ENCODE measurements at regions of chr7 and their contacts with region 1.

Region 1: GRCh38 chr7:74417419-74417971 is 36.2 kb upstream of the GTF2IRD1 start:
- DNase-seq: peak; percentile 59 to 83 (median 68)
- ATAC-seq: peak; percentile 71 to 96 (median 94)
- H3K4me3 ChIP-seq: no peak overlapping the region
- H3K27ac ChIP-seq: no peak overlapping the region
- H3K4me1 ChIP-seq: peaks cover 0 to 6% (median 0%) of the 10 kb centered on the region in 12 donors
- H3K27me3 ChIP-seq: peaks cover 0 to 4% (median 0%) of the 10 kb centered on the region in 9 donors
- CTCF ChIP-seq: peak; percentile 86 to 99 (median 96)
- POLR2A ChIP-seq: no peak

Region 2: GRCh38 chr7:74275401-74275881 is 142.1 kb before region 1 on chr7:
- intact Hi-C with region 1: no loop called
- DNase-seq: no peak
- ATAC-seq: no peak
- H3K4me3 ChIP-seq: no peak overlapping the region
- H3K27ac ChIP-seq: peak overlapping the region in 1 of 12 donors; percentile 24
- H3K4me1 ChIP-seq: peaks cover 0 to 41% (median 24%) of the 10 kb centered on the region in 12 donors
- H3K27me3 ChIP-seq: no peaks in the 10 kb centered on the region
- CTCF ChIP-seq: peak; percentile 11 to 52 (median 36)
- POLR2A ChIP-seq: no peak

Region 3: DNA sequence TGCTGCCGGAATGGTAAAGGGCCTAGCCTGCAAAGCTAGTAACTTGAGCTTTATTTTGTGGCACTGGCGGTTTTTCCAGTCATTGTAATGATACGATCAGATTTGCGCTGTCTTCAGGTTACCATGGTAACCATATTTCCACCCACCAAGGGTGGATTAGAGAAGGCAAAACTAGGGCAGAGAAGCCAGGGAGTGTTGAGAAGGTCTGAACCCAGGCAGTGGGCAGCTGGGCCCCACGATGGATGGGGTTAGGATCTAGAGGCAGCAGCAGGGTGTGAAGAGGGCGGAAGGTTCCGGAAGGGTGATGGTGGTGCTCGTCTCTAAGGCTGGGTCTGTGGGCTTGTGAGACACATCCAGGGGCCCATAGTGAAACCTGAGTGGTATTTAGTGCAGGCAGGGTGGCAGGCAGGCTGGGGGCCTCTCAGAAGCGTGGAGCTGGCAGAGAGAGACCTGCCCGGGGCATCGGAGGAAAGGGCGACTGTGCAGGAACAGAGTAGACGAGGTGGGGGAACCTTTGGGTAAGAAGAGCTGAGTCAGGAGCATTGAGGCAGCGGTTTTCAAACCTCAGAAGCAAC is 152.1 kb after region 1 on chr7:
- intact Hi-C with region 1: loop called in 9 of 10 experiments (anchors 2 to 10 kb)
- DNase-seq: no peak
- ATAC-seq: no peak
- H3K4me3 ChIP-seq: no peak overlapping the region
- H3K27ac ChIP-seq: no peak overlapping the region
- H3K4me1 ChIP-seq: peaks cover 0 to 6% (median 0%) of the 10 kb centered on the region in 12 donors
- H3K27me3 ChIP-seq: no peaks in the 10 kb centered on the region
- CTCF ChIP-seq: no peak
- POLR2A ChIP-seq: no peak

Region 4: GRCh38 chr7:74709880-74710671 is 292.6 kb after region 1 on chr7:
- intact Hi-C with region 1: loop called in 1 of 10 experiments (anchors 10 kb)
- DNase-seq: no peak
- ATAC-seq: no peak
- H3K4me3 ChIP-seq: no peak overlapping the region
- H3K27ac ChIP-seq: no peak overlapping the region
- H3K4me1 ChIP-seq: no peaks in the 10 kb centered on the region
- H3K27me3 ChIP-seq: no peaks in the 10 kb centered on the region
- CTCF ChIP-seq: peak in 1 of 12 donors; percentile 10
- POLR2A ChIP-seq: no peak

Region 5: GRCh38 chr7:75048435-75049379 is 631.2 kb after region 1 on chr7:
- intact Hi-C with region 1: loop called in 2 of 10 experiments (anchors 5 kb)
- DNase-seq: no peak
- ATAC-seq: no peak
- H3K4me3 ChIP-seq: no peak overlapping the region
- H3K27ac ChIP-seq: no peak overlapping the region
- H3K4me1 ChIP-seq: peaks cover 0 to 12% (median 0%) of the 10 kb centered on the region in 12 donors
- H3K27me3 ChIP-seq: no peaks in the 10 kb centered on the region
- CTCF ChIP-seq: no peak
- POLR2A ChIP-seq: no peak

Measured in heart left ventricle (tissue), 16 donors.